Activated CD8-positive, alpha-beta T cell treated with anti-CD3 and anti-CD28 coated beads, Interleukin-2, amount 10 ng/mL, durations not matched to agents 7 days and 5 days (primary cell): ENCODE measurements at regions of chr17 and their contacts with region 1.

Region 1: GRCh38 chr17:30808785-30809286 is 15.7 kb downstream of the CRLF3 start:
- DNase-seq: peak; percentile 74
- ATAC-seq: peak; percentile 92
- H3K4me3 Mint-ChIP-seq: peak overlapping the region; percentile 85
- H3K27ac Mint-ChIP-seq: peak overlapping the region; percentile 99
- H3K4me1 Mint-ChIP-seq: peaks cover 64% of the 10 kb centered on the region
- H3K27me3 Mint-ChIP-seq: no peaks in the 10 kb centered on the region

Region 2: DNA sequence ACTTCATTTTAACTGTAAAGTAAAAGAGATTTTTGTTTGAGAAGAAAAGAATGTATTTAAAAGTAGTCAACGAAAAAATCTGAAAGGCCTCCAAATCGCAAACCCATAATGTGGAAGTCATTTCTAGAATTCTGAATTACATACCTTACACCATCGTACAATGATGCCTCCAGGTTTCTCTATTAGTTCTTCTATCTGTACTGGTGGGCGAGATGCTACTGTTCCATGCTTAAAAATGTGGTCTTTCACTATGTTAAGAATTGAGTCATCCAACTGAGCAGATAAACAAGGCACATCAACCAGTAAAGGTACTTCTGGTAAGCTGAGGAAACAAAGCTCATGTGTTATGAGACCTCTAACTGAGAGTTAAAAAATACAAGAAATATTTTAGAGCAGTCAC is 12.8 kb before region 1 on chr17:
- CTCF ChIA-PET with region 1: interaction called, 11 read pairs
- POLR2A ChIA-PET with region 1: interaction called, 5 read pairs
- DNase-seq: peak; percentile 18
- ATAC-seq: no peak
- H3K4me3 Mint-ChIP-seq: no peak overlapping the region
- H3K27ac Mint-ChIP-seq: no peak overlapping the region
- H3K4me1 Mint-ChIP-seq: peaks cover 8% of the 10 kb centered on the region
- H3K27me3 Mint-ChIP-seq: no peaks in the 10 kb centered on the region

Region 3: GRCh38 chr17:30831663-30832437 is 23.0 kb after region 1 on chr17 and contains the start of gene ATAD5:
- CTCF ChIA-PET with region 1: interaction called, 316 read pairs
- POLR2A ChIA-PET with region 1: interaction called, 218 read pairs
- DNase-seq: peak; percentile 92
- ATAC-seq: peak; percentile 93
- H3K4me3 Mint-ChIP-seq: peak within 1 kb of the TSS; percentile 94
- H3K27ac Mint-ChIP-seq: peak within 1 kb of the TSS; percentile 96
- H3K4me1 Mint-ChIP-seq: peaks cover 39% of the 10 kb centered on the region
- H3K27me3 Mint-ChIP-seq: no peaks in the 10 kb centered on the region
- total RNA-seq, gene ATAD5: 33.5 to 37.0 TPM